Astrocyte of the cerebellum (primary cell): ENCODE measurements at regions of chr2 and their contacts with region 1.

Region 1: DNA sequence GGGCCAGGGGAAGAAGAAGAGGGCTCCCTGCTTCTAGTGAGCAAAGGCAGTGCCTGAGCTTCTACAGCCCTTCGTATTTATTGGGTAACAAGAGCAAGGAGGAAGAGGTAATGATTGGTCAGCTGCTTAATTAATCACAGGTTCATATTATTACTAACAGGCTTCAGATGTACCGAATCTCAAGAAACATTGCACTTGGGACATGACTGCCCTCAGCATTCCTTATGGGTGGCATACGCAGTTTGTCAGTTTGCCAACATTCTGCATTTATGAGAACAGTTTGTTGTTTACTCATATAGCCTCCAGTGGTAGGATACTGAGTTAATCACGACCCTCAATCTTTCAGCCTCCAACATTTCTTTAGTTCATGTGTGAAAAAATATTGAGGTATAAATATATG is 84.5 kb downstream of the HIBCH start:
- DNase-seq: no peak
- H3K4me3 ChIP-seq: no peak overlapping the region
- CTCF ChIP-seq: no peak

Region 2: DNA sequence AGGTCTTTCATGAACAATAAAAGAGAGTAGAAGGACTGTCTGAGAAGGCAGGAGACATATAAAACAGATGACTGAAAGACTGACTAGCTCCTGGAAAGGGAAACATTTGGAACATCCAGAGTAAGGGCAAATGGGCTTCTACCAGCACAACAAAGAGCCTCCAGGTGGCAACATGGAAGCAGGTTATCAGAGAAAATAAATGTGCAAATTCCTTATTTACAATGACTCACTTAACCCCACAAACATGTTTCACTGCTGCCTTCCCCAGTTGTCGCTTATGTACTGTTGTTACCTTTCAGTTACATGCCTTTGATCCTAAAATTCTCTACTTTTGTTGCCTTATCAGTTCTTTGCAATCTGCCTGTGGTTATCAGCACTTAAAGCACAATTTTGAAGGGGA is 32.5 kb before region 1 on chr2:
- in situ Hi-C with region 1: loop called (anchors 5 kb)
- DNase-seq: no peak
- H3K4me3 ChIP-seq: no peak overlapping the region
- CTCF ChIP-seq: no peak